ENCODE measurements at regions of chr1 and their contacts with region 1.

Region 1: GRCh38 chr1:20212685-20213331 is 26.5 kb upstream of the PLA2G2C start:
- DNase-seq: peak; percentile 91
- ATAC-seq: peak; percentile 95
- H3K4me3 Mint-ChIP-seq: peak overlapping the region; percentile 39
- H3K27ac Mint-ChIP-seq: peak overlapping the region; percentile 78; the same call in 1 of the 2 replicates
- H3K4me1 Mint-ChIP-seq: peaks cover 29% of the 10 kb centered on the region
- H3K27me3 Mint-ChIP-seq: no peaks in the 10 kb centered on the region
- CTCF ChIP-seq: peak; percentile 53

Region 2: DNA sequence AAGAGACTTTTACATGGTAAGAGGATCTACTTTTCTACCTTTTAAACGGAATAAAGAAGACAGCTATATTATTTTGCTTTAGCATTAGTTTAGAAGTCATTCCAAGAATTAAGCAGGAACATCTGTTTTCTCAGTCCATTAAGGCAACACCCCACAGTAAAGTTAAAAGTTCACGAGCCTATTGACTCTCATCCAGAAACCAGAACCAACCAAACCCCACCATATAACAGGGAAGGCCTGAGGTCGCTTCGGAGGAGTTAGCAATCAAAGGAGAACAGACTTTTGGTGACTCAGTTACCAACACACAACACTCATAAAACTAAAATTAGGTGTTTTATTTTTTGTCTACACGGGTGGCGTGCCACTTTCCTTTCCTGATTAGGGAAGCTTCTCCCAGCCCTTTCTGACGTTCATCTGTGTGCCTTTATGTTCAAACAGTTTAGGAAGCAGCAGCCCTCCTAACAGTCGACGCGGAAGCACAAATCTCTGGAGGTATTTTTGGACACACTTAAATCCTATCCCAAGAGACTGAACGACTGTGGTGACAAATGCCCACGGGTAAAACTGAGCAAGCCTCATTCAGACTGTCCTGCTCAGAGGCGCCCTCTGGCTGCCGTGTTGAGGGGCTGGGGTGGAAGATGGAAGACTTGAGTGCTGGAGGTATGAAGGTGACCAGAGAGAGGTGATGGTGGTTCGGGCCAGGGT is 17.9 kb before region 1 on chr1:
- CTCF ChIA-PET with region 1: interaction called, 15 read pairs
- POLR2A ChIA-PET with region 1: no interaction called
- DNase-seq: peak; percentile 78
- ATAC-seq: peak; percentile 87
- H3K4me3 Mint-ChIP-seq: no peak overlapping the region
- H3K27ac Mint-ChIP-seq: no peak overlapping the region
- H3K4me1 Mint-ChIP-seq: peaks cover 24% of the 10 kb centered on the region
- H3K27me3 Mint-ChIP-seq: peaks cover 13% of the 10 kb centered on the region
- CTCF ChIP-seq: peak; percentile 81

Region 3: GRCh38 chr1:20329793-20330542 is 117.2 kb after region 1 on chr1:
- CTCF ChIA-PET with region 1: interaction called, 13 read pairs
- POLR2A ChIA-PET with region 1: no interaction called
- DNase-seq: peak; percentile 32
- ATAC-seq: peak; percentile 68
- H3K4me3 Mint-ChIP-seq: no peak overlapping the region
- H3K27ac Mint-ChIP-seq: no peak overlapping the region
- H3K4me1 Mint-ChIP-seq: peaks cover 9% of the 10 kb centered on the region
- H3K27me3 Mint-ChIP-seq: no peaks in the 10 kb centered on the region
- CTCF ChIP-seq: no peak

Region 4: DNA sequence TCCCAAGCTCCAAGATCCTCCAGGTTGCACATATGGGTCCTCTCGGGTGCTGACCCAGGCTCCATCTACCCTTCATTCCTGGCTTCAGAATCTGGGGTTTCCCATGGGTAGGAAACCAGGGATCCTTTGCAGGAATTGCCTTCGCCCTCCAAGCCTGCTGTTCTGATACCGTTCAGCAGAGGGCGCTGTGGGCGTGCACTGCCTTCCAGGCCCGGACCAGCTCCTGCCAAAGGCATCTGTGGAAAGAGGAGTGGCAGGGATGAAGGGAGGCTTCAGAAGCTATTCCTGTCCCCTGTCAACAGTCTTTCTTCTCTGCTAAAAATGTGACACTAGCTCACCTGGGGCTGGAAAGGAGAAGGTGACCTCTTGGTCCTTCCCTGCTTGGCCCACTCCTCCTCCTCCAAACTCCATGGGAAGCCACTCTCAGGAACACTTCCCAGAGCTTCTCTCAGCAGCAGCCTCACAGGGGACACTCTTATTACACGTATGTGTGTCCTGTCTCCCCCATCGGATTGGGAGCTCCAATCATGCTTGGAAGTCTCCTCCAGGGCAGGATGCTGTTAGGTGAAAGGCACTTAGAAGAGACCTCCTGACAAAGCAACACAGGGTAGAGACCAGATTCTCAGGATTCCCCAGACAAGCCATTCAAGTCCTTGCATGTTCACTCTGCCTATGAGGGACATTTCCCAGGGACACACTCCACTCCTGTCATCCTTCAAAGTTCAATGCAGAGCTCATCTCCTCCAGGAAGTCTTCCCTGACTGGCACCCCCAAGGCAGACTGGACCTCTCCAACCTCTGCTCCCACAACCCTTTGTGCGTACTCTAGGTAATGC is 149.2 kb after region 1 on chr1:
- CTCF ChIA-PET with region 1: interaction called, 41 read pairs
- POLR2A ChIA-PET with region 1: no interaction called
- DNase-seq: peak; percentile 95
- ATAC-seq: peak; percentile 77
- H3K4me3 Mint-ChIP-seq: no peak overlapping the region
- H3K27ac Mint-ChIP-seq: no peak overlapping the region
- H3K4me1 Mint-ChIP-seq: peaks cover 9% of the 10 kb centered on the region
- H3K27me3 Mint-ChIP-seq: peaks cover 50% of the 10 kb centered on the region
- CTCF ChIP-seq: peak; percentile 99

Region 5: GRCh38 chr1:20446796-20447195 is 234.0 kb after region 1 on chr1:
- CTCF ChIA-PET with region 1: interaction called, 12 read pairs
- POLR2A ChIA-PET with region 1: no interaction called
- DNase-seq: no peak
- ATAC-seq: no peak
- H3K4me3 Mint-ChIP-seq: no peak overlapping the region
- H3K27ac Mint-ChIP-seq: no peak overlapping the region
- H3K4me1 Mint-ChIP-seq: peaks cover 15% of the 10 kb centered on the region
- H3K27me3 Mint-ChIP-seq: peaks cover 3% of the 10 kb centered on the region; the same call in 1 of the 2 replicates
- CTCF ChIP-seq: no peak

Region 6: DNA sequence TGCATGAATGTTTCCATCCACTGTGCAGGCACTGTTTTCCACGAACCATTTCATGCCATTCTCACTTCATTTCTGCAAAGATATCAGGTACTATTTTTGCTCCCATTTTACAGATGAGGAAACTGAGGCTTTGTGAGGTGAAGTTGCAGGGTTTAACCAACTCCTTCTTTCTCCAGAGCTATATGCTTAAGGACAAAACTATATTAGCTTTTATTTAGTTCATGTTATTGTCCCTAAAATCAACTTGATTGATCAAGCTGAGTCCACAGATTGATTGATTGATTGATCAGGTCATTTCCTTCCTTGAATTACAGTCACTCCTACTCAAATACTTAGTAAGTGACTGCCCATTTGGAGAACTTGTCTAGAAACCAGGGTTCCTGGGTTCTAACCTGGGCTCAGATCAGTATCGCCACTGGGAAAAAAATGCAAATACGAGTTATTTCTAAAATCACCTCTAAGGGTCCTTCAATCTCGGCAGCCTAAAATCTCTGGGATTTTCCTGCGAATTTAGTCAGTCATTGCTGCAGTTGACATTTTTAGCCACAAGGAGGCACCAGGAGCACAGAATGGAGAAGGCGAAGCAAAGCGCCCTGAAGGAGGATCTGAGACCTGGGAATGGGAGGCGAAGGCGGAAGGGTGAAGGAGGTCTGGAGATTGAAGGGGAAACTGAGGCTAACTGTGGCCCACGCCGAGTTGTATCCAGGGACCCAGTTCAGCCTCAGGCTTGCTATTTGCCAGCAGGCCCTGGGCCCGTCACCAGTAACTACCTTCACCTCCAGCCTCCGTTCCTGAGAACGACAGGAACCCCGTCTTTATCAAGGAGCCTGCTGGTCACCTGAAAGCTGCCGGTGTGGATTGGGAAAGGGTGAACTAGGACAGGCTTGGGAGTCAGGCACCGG is 309.4 kb after region 1 on chr1:
- CTCF ChIA-PET with region 1: no interaction called
- POLR2A ChIA-PET with region 1: no interaction called
- DNase-seq: peak; percentile 90
- ATAC-seq: peak; percentile 91
- H3K4me3 Mint-ChIP-seq: peak overlapping the region; percentile 57
- H3K27ac Mint-ChIP-seq: no peak overlapping the region
- H3K4me1 Mint-ChIP-seq: 0 out of 2 replicates have a peak, but pooled peaks cover 4% of the 10 kb centered on the region
- H3K27me3 Mint-ChIP-seq: peaks cover 40% of the 10 kb centered on the region
- CTCF ChIP-seq: peak; percentile 75